CD14-positive monocyte (primary cell): ENCODE measurements at regions of chr10 and their contacts with region 1.

Region 1: DNA sequence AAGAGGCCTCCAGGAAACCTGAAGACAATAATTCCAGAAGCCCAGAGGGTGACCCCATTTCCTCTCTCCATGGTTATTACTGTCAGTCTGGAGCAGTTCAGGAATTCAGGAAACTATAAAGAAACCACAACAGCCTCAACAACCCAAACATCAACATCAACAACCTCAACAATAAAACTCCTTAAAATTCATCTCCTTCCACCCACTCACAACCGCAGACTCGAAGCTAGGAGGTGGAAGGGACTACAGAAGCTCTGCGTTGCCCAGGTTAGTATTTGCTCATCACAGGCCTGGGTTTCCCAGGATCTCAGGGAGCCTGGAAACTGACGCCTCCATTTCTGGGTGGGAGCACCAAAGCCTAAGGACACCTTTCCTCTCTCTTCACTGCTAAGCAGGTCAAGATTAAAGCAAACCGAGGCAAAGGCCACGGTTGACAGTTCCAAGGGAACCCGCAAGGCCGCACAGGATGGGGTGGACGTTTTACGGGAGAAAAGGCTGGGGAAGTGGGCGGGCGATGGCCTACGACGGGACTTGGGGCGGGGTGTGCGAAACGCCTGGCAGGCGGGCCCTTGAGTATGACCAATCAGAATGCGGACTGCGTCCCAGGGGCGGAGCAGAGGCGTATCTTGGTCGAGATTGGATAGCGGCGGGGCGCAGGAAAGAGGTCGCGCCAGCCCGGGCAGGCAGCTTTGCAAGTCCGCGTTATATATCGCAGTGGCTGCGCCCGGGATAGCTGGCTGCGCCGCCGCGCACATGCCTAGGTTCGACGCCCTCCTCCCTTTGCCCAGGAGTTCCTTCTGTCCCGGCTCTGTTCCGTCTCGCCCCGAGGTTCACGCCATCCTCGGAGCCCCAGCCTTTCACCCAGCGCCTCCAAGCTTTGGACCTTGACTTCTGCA is at the start of gene ELOVL3:
- DNase-seq: peak; percentile 86 to 89 (median 87)
- H3K4me3 ChIP-seq: peak within 1 kb of the TSS; percentile 30 to 78 (median 51)
- H3K4me3 Mint-ChIP-seq: peak within 1 kb of the TSS; percentile 84 to 95
- H3K27ac ChIP-seq: peak within 1 kb of the TSS; percentile 52 to 60
- H3K27ac Mint-ChIP-seq: peak within 1 kb of the TSS; percentile 81 to 96 (median 93)
- H3K4me1 ChIP-seq: peaks cover 40 to 45% of the 10 kb centered on the region in 2 donors
- H3K4me1 Mint-ChIP-seq: peaks cover 48% of the 10 kb centered on the region
- H3K27me3 ChIP-seq: peaks cover 6 to 14% of the 10 kb centered on the region in 2 donors
- H3K27me3 Mint-ChIP-seq: peaks cover 14 to 32% (median 28%) of the 10 kb centered on the region in 3 donors
- CTCF ChIP-seq: no peak
- polyA plus RNA-seq, gene ELOVL3: 1.5 to 3.2 (median 2.2) TPM

Region 2: GRCh38 chr10:101414034-101414433 is 811.9 kb before region 1 on chr10:
- intact Hi-C with region 1: no loop called
- DNase-seq: no peak
- H3K4me3 ChIP-seq: no peak overlapping the region
- H3K4me3 Mint-ChIP-seq: no peak overlapping the region
- H3K27ac ChIP-seq: no peak overlapping the region
- H3K27ac Mint-ChIP-seq: no peak overlapping the region
- H3K4me1 ChIP-seq: no peaks in the 10 kb centered on the region
- H3K4me1 Mint-ChIP-seq: peaks cover 2% of the 10 kb centered on the region
- H3K27me3 ChIP-seq: no peaks in the 10 kb centered on the region
- H3K27me3 Mint-ChIP-seq: peaks cover 0 to 2% (median 1%) of the 10 kb centered on the region in 3 donors
- CTCF ChIP-seq: no peak

Region 3: GRCh38 chr10:101797403-101798059 is 428.4 kb before region 1 on chr10:
- intact Hi-C with region 1: no loop called
- DNase-seq: no peak
- H3K4me3 ChIP-seq: no peak overlapping the region
- H3K4me3 Mint-ChIP-seq: no peak overlapping the region
- H3K27ac ChIP-seq: no peak overlapping the region
- H3K27ac Mint-ChIP-seq: peak overlapping the region in 1 of 7 donors; percentile 7
- H3K4me1 ChIP-seq: no peaks in the 10 kb centered on the region
- H3K4me1 Mint-ChIP-seq: no peaks in the 10 kb centered on the region
- H3K27me3 ChIP-seq: no peaks in the 10 kb centered on the region
- H3K27me3 Mint-ChIP-seq: no peaks in the 10 kb centered on the region
- CTCF ChIP-seq: no peak

Region 4: GRCh38 chr10:102245101-102245931 is 19.4 kb after region 1 on chr10 and contains the start of gene GBF1:
- intact Hi-C with region 1: loop called in 1 of 2 experiments (anchors 2 kb)
- DNase-seq: peak; percentile 98 to 99 (median 98)
- H3K4me3 ChIP-seq: peak within 1 kb of the TSS; percentile 77 to 90 (median 81)
- H3K4me3 Mint-ChIP-seq: peak within 1 kb of the TSS; percentile 97 to 99
- H3K27ac ChIP-seq: peak within 1 kb of the TSS; percentile 79 to 88
- H3K27ac Mint-ChIP-seq: peak within 1 kb of the TSS; percentile 96 to 99 (median 98)
- H3K4me1 ChIP-seq: peaks cover 44 to 52% of the 10 kb centered on the region in 2 donors
- H3K4me1 Mint-ChIP-seq: peaks cover 46% of the 10 kb centered on the region
- H3K27me3 ChIP-seq: peaks cover 8 to 21% of the 10 kb centered on the region in 2 donors
- H3K27me3 Mint-ChIP-seq: peaks cover 21 to 27% (median 25%) of the 10 kb centered on the region in 3 donors
- CTCF ChIP-seq: no peak
- polyA plus RNA-seq, gene GBF1: 4.2 to 17.4 (median 11.9) TPM

Region 5: DNA sequence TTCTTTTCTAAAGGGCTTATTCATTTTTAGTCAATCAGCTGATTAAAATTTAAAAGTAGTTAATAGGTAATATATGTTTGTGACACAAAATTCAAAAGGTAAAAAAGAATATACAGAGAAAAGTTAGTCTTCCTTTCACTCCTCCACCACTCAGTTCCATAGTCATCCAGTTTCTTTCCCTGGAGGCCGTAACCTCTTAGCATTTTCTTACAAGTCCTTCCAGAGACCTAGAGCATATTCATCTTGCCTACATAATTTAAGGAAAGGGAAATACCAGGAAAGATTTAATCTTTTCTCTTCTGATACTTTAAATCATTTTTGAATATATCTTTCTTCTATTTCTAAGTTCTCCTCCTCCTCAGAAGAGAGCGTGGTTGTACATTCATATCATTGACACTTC is 29.5 kb after region 1 on chr10:
- intact Hi-C with region 1: no loop called
- DNase-seq: no peak
- H3K4me3 ChIP-seq: no peak overlapping the region
- H3K4me3 Mint-ChIP-seq: no peak overlapping the region
- H3K27ac ChIP-seq: no peak overlapping the region
- H3K27ac Mint-ChIP-seq: no peak overlapping the region
- H3K4me1 ChIP-seq: no peaks in the 10 kb centered on the region
- H3K4me1 Mint-ChIP-seq: peaks cover 3% of the 10 kb centered on the region
- H3K27me3 ChIP-seq: no peaks in the 10 kb centered on the region
- H3K27me3 Mint-ChIP-seq: no peaks in the 10 kb centered on the region
- CTCF ChIP-seq: no peak

Region 6: DNA sequence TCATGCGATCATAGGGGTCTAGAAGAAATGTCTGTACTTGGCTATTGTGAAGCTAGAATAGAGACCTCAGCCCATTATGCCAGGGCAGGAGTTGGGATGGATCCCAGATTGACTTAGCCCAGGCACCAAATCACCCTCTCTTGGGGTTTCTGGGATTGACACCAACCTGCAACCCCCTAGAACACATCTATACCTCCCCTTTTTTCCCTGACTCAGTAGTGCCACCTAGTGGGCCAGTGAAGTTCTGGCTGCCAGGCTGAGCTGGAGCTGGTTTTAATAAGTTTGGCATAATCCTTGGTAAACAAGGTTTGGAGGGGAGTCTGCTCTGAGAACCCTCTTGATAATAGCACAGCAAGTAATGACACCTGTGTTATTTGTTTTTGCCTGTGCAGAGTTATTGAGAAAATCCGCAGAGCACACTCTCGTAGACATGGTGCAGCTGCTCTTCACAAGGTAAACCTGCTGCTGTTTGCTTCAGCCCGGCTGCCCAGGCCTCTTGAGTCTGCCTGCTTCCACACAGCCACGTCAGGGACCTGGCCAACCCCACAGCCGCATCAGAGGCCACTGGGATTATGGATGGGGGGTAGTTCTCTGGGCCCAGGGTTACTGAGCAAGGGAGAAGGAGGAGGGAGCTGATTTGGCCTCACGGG is 126.3 kb after region 1 on chr10:
- intact Hi-C with region 1: loop called (anchors 2 to 5 kb)
- DNase-seq: peak; percentile 37 to 53 (median 46)
- H3K4me3 ChIP-seq: no peak overlapping the region
- H3K4me3 Mint-ChIP-seq: no peak overlapping the region
- H3K27ac ChIP-seq: no peak overlapping the region
- H3K27ac Mint-ChIP-seq: peak overlapping the region in 1 of 7 donors; percentile 59
- H3K4me1 ChIP-seq: no peaks in the 10 kb centered on the region
- H3K4me1 Mint-ChIP-seq: no peaks in the 10 kb centered on the region
- H3K27me3 ChIP-seq: no peaks in the 10 kb centered on the region
- H3K27me3 Mint-ChIP-seq: peaks cover 0 to 2% (median 0%) of the 10 kb centered on the region in 3 donors
- CTCF ChIP-seq: peak; percentile 97